Gastrocnemius medialis (tissue), 4 donors: ENCODE measurements at regions of chr2 and their contacts with region 1.

Region 1: GRCh38 chr2:190088917-190089316 is 26.4 kb upstream of the MSTN start:
- DNase-seq: peak in 1 of 2 donors; percentile 36
- ATAC-seq: peak; percentile 74 to 84
- H3K4me3 ChIP-seq: no peak overlapping the region
- H3K27ac ChIP-seq: no peak overlapping the region
- H3K4me1 ChIP-seq: peaks cover 0 to 9% of the 10 kb centered on the region in 2 donors
- H3K27me3 ChIP-seq: no peaks in the 10 kb centered on the region
- CTCF ChIP-seq: peak; percentile 66 to 78 (median 68)
- POLR2A ChIP-seq: no peak

Region 2: GRCh38 chr2:189254268-189254883 is 834.5 kb before region 1 on chr2:
- in situ Hi-C with region 1: no loop called
- intact Hi-C with region 1: no loop called
- DNase-seq: peak; percentile 4 to 57
- ATAC-seq: peak; percentile 61 to 72
- H3K4me3 ChIP-seq: no peak overlapping the region
- H3K27ac ChIP-seq: peak overlapping the region in 2 of 4 donors; percentile 33 to 37
- H3K4me1 ChIP-seq: no peaks in the 10 kb centered on the region
- H3K27me3 ChIP-seq: no peaks in the 10 kb centered on the region
- CTCF ChIP-seq: no peak
- POLR2A ChIP-seq: no peak

Region 3: DNA sequence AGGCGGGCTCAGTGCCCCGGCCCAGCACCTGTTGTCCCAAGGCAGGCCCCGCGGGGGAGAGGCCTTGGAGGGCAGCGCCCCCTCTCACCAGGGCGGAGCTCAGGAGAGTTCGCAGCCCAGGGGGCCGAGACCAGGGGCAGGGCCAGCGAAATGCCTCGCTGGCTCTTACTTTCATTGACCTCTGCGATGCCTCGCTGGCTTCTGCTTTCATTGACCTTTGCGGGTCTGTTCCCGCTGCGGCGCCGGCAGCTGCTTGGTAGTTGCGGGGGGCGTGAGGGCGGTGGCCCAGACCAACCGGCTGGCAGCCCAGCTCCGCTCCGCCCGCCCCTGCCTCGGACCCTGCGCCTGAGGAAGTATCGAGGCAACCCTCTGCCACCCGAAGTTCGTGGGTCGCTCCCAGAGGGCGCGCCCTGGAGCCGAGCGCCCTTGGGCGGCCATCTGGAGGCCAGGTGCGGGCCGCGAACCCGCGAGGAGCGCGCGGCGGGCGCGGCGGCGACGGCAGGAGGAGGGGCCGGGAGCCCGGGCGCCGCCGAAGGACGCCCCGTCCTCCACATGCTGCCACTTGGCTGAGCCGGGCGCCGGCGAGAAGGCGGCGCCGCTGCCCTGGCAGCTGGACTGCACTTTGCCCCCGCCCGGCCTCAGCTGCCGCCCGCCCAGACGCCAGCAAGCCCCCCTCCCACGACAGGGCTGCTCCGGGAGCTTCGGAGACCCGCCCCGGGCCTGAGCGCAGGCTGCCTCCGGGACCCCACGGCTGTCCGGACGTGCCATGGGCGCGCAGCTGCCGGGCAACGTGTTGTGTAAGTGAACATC is 91.6 kb after region 1 on chr2:
- in situ Hi-C with region 1: loop called in 3 of 4 experiments (anchors 10 to 25 kb)
- intact Hi-C with region 1: loop called (anchors 1 kb)
- DNase-seq: peak; percentile 31 to 80
- ATAC-seq: peak; percentile 70 to 81
- H3K4me3 ChIP-seq: peak overlapping the region; percentile 57 to 80 (median 78)
- H3K27ac ChIP-seq: peak overlapping the region; percentile 82 to 94 (median 85)
- H3K4me1 ChIP-seq: peaks cover 0 to 4% of the 10 kb centered on the region in 2 donors
- H3K27me3 ChIP-seq: no peaks in the 10 kb centered on the region
- CTCF ChIP-seq: peak in 3 of 5 experiments; percentile 59 to 74 (median 68)
- POLR2A ChIP-seq: peak; percentile 43 to 44

Region 4: GRCh38 chr2:190319555-190320498 is 230.9 kb after region 1 on chr2 and contains the start of gene HIBCH:
- in situ Hi-C with region 1: no loop called
- intact Hi-C with region 1: loop called (anchors 5 kb)
- DNase-seq: peak; percentile 95 to 98
- ATAC-seq: peak; percentile 98
- H3K4me3 ChIP-seq: peak within 1 kb of the TSS; percentile 62 to 81 (median 70)
- H3K27ac ChIP-seq: peak within 1 kb of the TSS; percentile 83 to 91 (median 89)
- H3K4me1 ChIP-seq: peaks cover 14 to 19% of the 10 kb centered on the region in 2 donors
- H3K27me3 ChIP-seq: no peaks in the 10 kb centered on the region
- CTCF ChIP-seq: peak; percentile 40 to 78 (median 49)
- POLR2A ChIP-seq: peak; percentile 59 to 76
- total RNA-seq, gene HIBCH: 3.7 to 20.1 (median 10.6) TPM

Region 5: DNA sequence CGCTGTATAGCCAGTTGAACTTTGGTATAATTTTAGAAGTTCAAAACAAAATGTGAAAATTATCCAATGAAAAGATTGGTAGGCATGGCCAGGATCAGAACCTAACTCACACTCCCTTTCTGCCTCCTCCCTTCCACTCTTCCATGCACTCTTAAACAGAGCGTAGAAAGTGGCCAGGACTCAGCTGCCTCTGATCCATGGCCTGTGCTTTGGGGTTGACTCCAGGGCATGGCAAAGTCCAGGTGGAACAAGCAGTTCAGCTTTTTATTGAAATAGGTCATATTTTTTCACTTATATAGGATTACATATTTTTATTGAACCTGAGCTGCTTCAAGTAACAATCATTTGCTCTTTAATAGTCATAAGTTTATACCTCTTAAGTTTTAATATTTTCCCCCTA is 280.7 kb after region 1 on chr2:
- in situ Hi-C with region 1: loop called in 3 of 4 experiments (anchors 5 to 25 kb)
- intact Hi-C with region 1: loop called (anchors 2 kb)
- DNase-seq: no peak
- ATAC-seq: no peak
- H3K4me3 ChIP-seq: no peak overlapping the region
- H3K27ac ChIP-seq: no peak overlapping the region
- H3K4me1 ChIP-seq: peaks cover 0 to 4% of the 10 kb centered on the region in 2 donors
- H3K27me3 ChIP-seq: no peaks in the 10 kb centered on the region
- CTCF ChIP-seq: no peak
- POLR2A ChIP-seq: no peak

Region 6: GRCh38 chr2:190382851-190383250 is 293.9 kb after region 1 on chr2:
- in situ Hi-C with region 1: loop called in 1 of 4 experiments (anchors 10 kb)
- intact Hi-C with region 1: no loop called
- DNase-seq: no peak
- ATAC-seq: no peak
- H3K4me3 ChIP-seq: no peak overlapping the region
- H3K27ac ChIP-seq: no peak overlapping the region
- H3K4me1 ChIP-seq: no peaks in the 10 kb centered on the region
- H3K27me3 ChIP-seq: no peaks in the 10 kb centered on the region
- CTCF ChIP-seq: peak in 3 of 5 experiments; percentile 12 to 45 (median 36)
- POLR2A ChIP-seq: no peak